ENCODE measurements at regions of chr5 and their contacts with region 1.

Region 1: GRCh38 chr5:80654391-80655230 is at the starts of genes DHFR and MSH3:
- DNase-seq: peak; percentile 86 to 91 (median 91)
- H3K4me3 ChIP-seq: peak within 1 kb of the TSS; percentile 64 to 79
- H3K4me3 Mint-ChIP-seq: peak within 1 kb of the TSS; percentile 86 to 97 (median 94)
- H3K27ac ChIP-seq: peak within 1 kb of the TSS; percentile 67
- H3K27ac Mint-ChIP-seq: peak within 1 kb of the TSS; percentile 86 to 99 (median 97)
- H3K4me1 ChIP-seq: peaks cover 34% of the 10 kb centered on the region
- H3K4me1 Mint-ChIP-seq: peaks cover 20 to 37% (median 27%) of the 10 kb centered on the region in 4 donors
- H3K27me3 ChIP-seq: no peaks in the 10 kb centered on the region
- H3K27me3 Mint-ChIP-seq: no peaks in the 10 kb centered on the region
- total RNA-seq, gene DHFR: 18.5 to 19.2 TPM
- total RNA-seq, gene MSH3: 14.3 to 17.1 TPM

Region 2: DNA sequence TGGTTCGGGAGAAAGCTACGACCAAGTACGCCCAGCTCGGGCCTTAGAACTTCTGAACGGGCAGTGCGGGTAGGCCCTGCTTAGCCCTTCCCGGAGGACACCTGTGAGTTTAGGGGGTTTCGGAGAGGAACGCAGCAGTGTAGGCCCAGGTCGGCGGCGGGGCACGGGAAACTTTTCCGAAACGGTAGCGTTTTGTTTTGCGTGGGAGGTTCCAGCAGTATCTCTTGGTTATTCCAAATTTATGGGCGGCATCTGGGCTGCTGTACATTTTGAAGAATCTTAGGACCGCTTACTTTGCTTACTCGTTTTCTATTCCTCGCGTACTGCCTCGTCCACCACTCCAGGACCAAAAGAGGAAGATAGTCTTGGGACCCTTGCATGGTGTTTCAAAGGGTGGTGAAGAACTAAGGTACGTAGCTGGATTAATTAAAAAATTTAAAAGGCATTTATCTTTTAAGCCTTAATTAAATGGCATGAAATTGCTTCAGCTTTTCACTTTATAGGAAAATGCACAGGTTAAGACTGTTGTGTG is 1041.9 kb before region 1 on chr5:
- CTCF ChIA-PET with region 1: no interaction called
- POLR2A ChIA-PET with region 1: interaction called, 3 read pairs
- intact Hi-C with region 1: loop called (anchors 10 kb)
- DNase-seq: no peak
- H3K4me3 ChIP-seq: peak overlapping the region; percentile 67 to 94
- H3K4me3 Mint-ChIP-seq: peak overlapping the region; percentile 94 to 100 (median 99)
- H3K27ac ChIP-seq: peak overlapping the region; percentile 96
- H3K27ac Mint-ChIP-seq: peak overlapping the region; percentile 98 to 99 (median 98)
- H3K4me1 ChIP-seq: peaks cover 32% of the 10 kb centered on the region
- H3K4me1 Mint-ChIP-seq: peaks cover 24 to 53% (median 36%) of the 10 kb centered on the region in 4 donors
- H3K27me3 ChIP-seq: no peaks in the 10 kb centered on the region
- H3K27me3 Mint-ChIP-seq: peaks cover 0 to 8% of the 10 kb centered on the region in 2 donors

Region 3: DNA sequence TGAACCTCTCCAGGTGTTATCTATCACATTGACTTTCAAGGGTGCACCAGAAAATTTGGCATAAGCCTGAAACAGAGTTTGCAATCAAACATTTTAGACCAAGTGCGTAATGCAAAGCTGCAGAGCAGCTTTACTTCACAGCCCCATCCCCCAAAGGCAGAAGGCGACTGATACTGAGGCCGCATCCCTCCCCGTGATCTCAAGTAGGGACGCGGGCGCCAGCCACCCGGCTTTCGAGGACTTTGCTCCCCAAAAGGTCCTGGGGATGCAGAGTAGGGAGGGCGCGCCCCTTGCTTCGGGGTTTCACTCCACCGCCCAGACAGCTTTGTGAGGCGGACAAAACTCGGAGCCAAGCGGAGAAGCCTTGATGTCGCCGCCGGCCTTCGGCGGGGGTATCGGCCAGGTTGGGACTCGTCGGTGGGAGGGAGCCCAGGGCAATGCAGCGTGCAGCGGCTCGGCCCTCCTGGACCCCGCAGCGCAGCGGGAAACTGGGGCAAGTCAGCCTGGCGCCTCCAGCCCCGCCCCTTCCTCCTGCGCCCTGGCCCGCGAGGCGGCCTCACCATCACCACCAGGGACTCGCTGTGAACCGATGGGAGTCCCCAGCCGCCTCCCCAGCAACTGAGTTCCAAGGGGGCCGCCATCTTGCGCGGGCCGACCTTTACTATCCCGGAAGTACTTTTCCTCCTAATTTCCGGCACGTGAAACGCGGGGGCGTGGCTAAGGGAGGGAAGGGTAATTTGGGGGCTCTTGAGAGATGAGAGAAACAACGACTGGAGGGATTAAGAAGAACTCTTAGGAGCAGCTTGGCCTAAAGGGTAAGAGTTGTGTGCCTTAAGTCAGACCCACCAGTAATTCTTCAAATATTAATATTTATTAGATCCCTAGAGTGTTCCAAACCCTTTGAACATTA is 663.8 kb before region 1 on chr5 and contains the start of gene MTX3:
- CTCF ChIA-PET with region 1: no interaction called
- POLR2A ChIA-PET with region 1: interaction called, 3 read pairs
- intact Hi-C with region 1: loop called (anchors 5 kb)
- DNase-seq: peak; percentile 80 to 90 (median 85)
- H3K4me3 ChIP-seq: peak within 1 kb of the TSS; percentile 63 to 75
- H3K4me3 Mint-ChIP-seq: peak within 1 kb of the TSS; percentile 82 to 93 (median 87)
- H3K27ac ChIP-seq: peak within 1 kb of the TSS; percentile 67
- H3K27ac Mint-ChIP-seq: peak within 1 kb of the TSS; percentile 83 to 96 (median 93)
- H3K4me1 ChIP-seq: peaks cover 23% of the 10 kb centered on the region
- H3K4me1 Mint-ChIP-seq: peaks cover 15 to 23% (median 19%) of the 10 kb centered on the region in 4 donors
- H3K27me3 ChIP-seq: no peaks in the 10 kb centered on the region
- H3K27me3 Mint-ChIP-seq: peaks cover 7% of the 10 kb centered on the region in 2 donors
- total RNA-seq, gene MTX3: 22.7 to 22.9 TPM

Region 4: GRCh38 chr5:80369521-80369920 is 285.1 kb before region 1 on chr5:
- CTCF ChIA-PET with region 1: no interaction called
- POLR2A ChIA-PET with region 1: no interaction called
- intact Hi-C with region 1: no loop called
- DNase-seq: no peak
- H3K4me3 ChIP-seq: no peak overlapping the region
- H3K4me3 Mint-ChIP-seq: no peak overlapping the region
- H3K27ac ChIP-seq: no peak overlapping the region
- H3K27ac Mint-ChIP-seq: no peak overlapping the region
- H3K4me1 ChIP-seq: no peaks in the 10 kb centered on the region
- H3K4me1 Mint-ChIP-seq: no peaks in the 10 kb centered on the region
- H3K27me3 ChIP-seq: no peaks in the 10 kb centered on the region
- H3K27me3 Mint-ChIP-seq: peaks cover 8 to 12% of the 10 kb centered on the region in 2 donors

Region 5: DNA sequence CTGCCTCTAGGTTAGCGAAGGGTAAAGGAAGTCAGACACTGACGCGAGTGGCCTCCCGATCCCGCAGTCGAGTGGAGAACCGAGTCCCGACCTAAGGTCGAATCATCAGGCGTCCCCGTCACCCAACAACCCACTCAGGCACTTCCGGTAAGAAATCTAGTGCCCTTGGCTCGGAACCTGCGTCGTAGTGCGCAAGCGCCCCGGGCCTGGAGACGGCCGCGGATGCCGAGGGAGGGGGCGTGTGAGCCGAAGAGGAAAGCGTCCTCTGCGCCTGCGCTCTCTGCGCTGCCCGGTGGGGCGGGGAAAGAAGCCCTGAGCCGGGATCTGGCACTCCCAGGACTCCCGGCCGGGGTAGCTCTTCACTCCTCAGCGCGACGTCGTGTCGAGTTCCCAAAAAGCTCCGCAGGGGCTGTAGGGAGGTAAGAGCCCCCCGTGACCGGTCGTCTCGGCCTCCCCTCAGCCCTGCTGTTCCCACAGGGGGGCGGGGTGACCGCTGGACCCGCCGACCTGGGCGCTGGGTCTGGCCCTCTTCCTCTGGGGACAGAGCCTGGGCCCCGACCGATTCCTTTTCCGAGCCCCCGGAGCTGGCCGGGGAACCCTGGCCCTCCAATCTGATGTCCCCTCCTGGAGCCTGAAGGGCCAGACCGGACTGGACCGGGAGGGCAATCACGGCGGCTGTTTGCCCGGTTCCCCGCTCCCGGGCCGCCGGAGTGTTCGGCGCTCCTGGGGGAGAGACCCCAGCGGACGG is 246.7 kb before region 1 on chr5 and contains the start of gene ZFYVE16:
- CTCF ChIA-PET with region 1: no interaction called
- POLR2A ChIA-PET with region 1: interaction called, 3 read pairs
- intact Hi-C with region 1: loop called (anchors 1 kb)
- DNase-seq: peak; percentile 95 to 97 (median 96)
- H3K4me3 ChIP-seq: peak within 1 kb of the TSS; percentile 73 to 79
- H3K4me3 Mint-ChIP-seq: peak within 1 kb of the TSS; percentile 92 to 98 (median 96)
- H3K27ac ChIP-seq: peak within 1 kb of the TSS; percentile 86
- H3K27ac Mint-ChIP-seq: peak within 1 kb of the TSS; percentile 91 to 100 (median 99)
- H3K4me1 ChIP-seq: peaks cover 22% of the 10 kb centered on the region
- H3K4me1 Mint-ChIP-seq: peaks cover 15 to 24% (median 20%) of the 10 kb centered on the region in 4 donors
- H3K27me3 ChIP-seq: no peaks in the 10 kb centered on the region
- H3K27me3 Mint-ChIP-seq: no peaks in the 10 kb centered on the region
- total RNA-seq, gene ZFYVE16: 23.2 to 25.3 TPM

Region 6: DNA sequence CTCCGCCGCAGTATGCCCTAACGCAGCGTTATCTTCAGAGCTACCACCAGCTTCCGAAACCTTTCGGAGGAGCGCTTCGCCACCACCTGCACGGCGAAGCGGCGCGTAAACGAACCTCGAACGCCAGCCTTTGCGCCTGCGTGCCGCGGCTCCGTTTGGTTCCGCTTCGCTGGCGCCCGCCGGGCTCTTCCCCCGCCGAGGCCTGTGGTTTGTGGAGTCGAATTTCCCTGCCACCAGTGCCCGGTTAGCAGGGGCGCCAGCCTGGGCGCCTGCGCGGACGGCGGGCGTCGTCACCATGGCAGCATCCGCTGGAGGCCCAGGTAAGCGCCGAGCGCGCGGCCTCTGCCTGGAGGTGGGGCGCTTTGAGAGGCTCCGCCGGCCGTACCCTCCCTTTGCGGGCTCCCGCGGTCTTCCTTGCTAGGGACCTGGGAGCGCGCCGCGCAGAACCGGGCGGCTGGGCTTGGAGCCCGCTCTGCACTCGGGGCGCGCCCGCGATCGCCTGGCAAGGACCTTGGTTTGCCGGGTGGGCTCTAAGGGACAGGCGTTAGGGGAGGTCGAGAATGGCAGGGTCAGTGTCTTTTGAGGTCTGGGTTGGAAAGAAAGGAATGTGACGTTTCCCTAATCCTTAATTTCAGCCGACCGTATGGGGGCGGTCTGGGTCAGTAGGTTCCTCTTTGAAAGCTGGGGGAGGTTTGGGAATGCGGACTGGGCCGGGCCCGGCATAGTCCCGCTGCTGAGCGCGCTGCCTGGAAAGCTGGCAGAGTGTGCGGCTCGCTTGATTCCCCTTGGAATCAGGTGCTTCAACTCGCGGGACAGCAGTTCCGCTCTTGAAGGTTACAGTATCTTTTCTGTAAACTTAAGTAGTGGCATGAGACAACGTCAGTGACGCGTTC is 166.5 kb before region 1 on chr5 and contains the start of gene FAM151B:
- CTCF ChIA-PET with region 1: no interaction called
- POLR2A ChIA-PET with region 1: no interaction called
- intact Hi-C with region 1: loop called (anchors 1 kb)
- DNase-seq: peak; percentile 72 to 80 (median 78)
- H3K4me3 ChIP-seq: peak within 1 kb of the TSS in 1 of 2 donors; percentile 48
- H3K4me3 Mint-ChIP-seq: peak within 1 kb of the TSS; percentile 72 to 90 (median 80)
- H3K27ac ChIP-seq: peak within 1 kb of the TSS; percentile 9
- H3K27ac Mint-ChIP-seq: peak within 1 kb of the TSS; percentile 14 to 89 (median 56)
- H3K4me1 ChIP-seq: peaks cover 15% of the 10 kb centered on the region
- H3K4me1 Mint-ChIP-seq: peaks cover 7 to 20% (median 16%) of the 10 kb centered on the region in 4 donors
- H3K27me3 ChIP-seq: no peaks in the 10 kb centered on the region
- H3K27me3 Mint-ChIP-seq: peaks cover 6 to 10% of the 10 kb centered on the region in 2 donors
- total RNA-seq, gene FAM151B: 0.39 to 0.47 TPM

Region 7: DNA sequence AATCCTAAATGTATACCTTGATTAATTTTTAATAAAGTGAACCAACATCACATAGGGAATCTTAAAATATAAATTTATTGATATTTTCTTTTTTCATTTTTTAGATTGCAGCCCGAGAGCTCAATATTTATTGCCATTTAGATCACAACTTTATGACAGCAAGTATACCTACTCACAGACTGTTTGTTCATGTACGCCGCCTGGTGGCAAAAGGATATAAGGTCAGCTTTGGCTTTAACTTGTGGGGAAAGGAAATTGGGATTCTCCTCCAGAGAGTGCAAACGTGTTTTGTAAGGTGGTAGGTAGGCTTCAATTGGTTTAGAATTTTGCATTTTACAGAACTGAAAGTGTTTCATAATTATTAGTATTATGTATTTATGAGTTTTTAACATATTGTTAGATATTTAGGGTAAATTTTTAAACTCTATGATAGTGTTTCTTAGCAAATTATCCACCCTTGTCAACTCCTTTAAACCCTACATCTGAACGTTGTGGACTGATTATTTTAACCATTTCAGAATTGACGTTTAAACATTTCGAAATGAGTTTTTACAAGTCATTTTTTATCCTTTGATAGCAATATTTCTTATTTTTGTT is 17.6 kb after region 1 on chr5:
- CTCF ChIA-PET with region 1: interaction called, 23 read pairs
- POLR2A ChIA-PET with region 1: interaction called, 6 read pairs
- intact Hi-C with region 1: loop called (anchors 1 kb)
- DNase-seq: peak; percentile 51 to 63 (median 53)
- H3K4me3 ChIP-seq: no peak overlapping the region
- H3K4me3 Mint-ChIP-seq: no peak overlapping the region
- H3K27ac ChIP-seq: no peak overlapping the region
- H3K27ac Mint-ChIP-seq: no peak overlapping the region
- H3K4me1 ChIP-seq: no peaks in the 10 kb centered on the region
- H3K4me1 Mint-ChIP-seq: peaks cover 0 to 10% (median 5%) of the 10 kb centered on the region in 4 donors
- H3K27me3 ChIP-seq: no peaks in the 10 kb centered on the region
- H3K27me3 Mint-ChIP-seq: no peaks in the 10 kb centered on the region

Region 8: DNA sequence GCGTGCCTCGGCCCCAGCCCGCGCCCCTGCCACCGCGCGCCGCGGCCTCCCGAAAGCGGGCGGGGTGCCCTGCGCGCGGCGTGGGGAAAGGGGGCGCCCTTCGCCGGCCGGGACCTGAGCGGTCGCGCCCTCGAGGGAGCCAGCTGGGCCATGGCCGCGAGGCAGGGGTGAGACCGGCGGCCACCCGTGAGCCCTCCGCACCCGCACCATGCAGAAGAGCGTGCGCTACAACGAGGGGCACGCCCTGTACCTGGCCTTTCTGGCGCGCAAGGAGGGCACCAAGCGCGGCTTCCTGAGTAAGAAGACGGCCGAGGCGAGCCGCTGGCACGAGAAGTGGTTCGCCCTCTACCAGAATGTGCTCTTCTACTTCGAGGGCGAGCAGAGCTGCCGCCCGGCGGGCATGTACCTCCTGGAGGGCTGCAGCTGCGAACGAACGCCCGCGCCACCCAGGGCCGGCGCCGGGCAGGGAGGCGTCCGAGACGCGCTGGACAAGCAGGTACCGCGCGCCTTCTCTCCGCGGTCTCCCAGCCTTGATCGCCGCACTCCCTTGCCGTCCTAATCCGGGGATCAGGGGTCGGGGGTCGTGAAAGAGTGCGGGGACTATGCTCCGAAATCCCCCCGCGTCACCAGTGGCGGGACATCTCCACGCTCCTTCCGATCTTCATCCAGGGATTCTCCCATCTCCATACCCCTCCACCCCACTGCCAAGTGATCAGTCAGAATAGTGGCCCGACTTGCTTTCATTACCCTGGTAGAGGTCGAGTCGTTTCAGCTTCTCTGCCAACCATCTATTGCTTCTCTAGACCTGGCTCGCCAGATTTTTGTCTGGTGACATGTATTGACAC is 306.1 kb after region 1 on chr5:
- CTCF ChIA-PET with region 1: no interaction called
- POLR2A ChIA-PET with region 1: no interaction called
- intact Hi-C with region 1: loop called (anchors 10 kb)
- DNase-seq: peak; percentile 45 to 59 (median 55)
- H3K4me3 ChIP-seq: peak overlapping the region; percentile 84 to 85
- H3K4me3 Mint-ChIP-seq: peak overlapping the region; percentile 87 to 97 (median 94)
- H3K27ac ChIP-seq: peak overlapping the region; percentile 44
- H3K27ac Mint-ChIP-seq: peak overlapping the region; percentile 76 to 94 (median 82)
- H3K4me1 ChIP-seq: peaks cover 52% of the 10 kb centered on the region
- H3K4me1 Mint-ChIP-seq: peaks cover 40 to 64% (median 50%) of the 10 kb centered on the region in 4 donors
- H3K27me3 ChIP-seq: no peaks in the 10 kb centered on the region
- H3K27me3 Mint-ChIP-seq: no peaks in the 10 kb centered on the region